ENCODE measurements at regions of chr11 and their contacts with region 1.

Region 1: DNA sequence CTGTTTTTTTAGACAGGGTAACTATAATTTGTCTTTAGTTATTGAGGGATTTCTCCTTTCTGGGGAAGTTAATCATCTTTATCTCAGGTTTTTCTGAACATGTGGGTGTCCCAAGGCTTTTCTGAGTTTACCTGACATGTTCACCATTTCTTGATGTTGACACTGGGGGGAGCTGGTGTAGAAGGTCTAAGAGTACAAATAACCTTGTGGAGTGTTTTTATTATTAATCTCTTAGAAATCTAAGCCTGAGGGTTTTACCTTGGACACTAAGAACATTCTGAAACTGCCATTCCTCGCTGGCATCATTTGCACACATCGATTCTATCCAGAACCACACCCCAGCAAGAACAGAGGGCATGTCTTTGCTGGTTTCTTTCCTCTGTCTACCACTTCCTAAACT is 15.6 kb upstream of the C11orf91 start:
- DNase-seq: peak; percentile 53
- ATAC-seq: peak; percentile 66
- H3K4me3 Mint-ChIP-seq: no peak overlapping the region
- H3K27ac Mint-ChIP-seq: no peak overlapping the region
- H3K4me1 Mint-ChIP-seq: peaks cover under 1% of the 10 kb centered on the region
- H3K27me3 Mint-ChIP-seq: no peaks in the 10 kb centered on the region
- CTCF ChIP-seq: peak; percentile 21

Region 2: GRCh38 chr11:33700425-33701271 is 15.6 kb before region 1 on chr11 and contains the start of gene C11orf91:
- CTCF ChIA-PET with region 1: interaction called, 20 read pairs
- POLR2A ChIA-PET with region 1: interaction called, 3 read pairs
- intact Hi-C with region 1: no loop called
- DNase-seq: peak; percentile 95
- ATAC-seq: peak; percentile 95
- H3K4me3 Mint-ChIP-seq: peak within 1 kb of the TSS; percentile 82
- H3K27ac Mint-ChIP-seq: peak within 1 kb of the TSS; percentile 37
- H3K4me1 Mint-ChIP-seq: peaks cover 17% of the 10 kb centered on the region
- H3K27me3 Mint-ChIP-seq: peaks cover 7% of the 10 kb centered on the region
- CTCF ChIP-seq: no peak
- total RNA-seq, gene C11orf91: not detected

Measured in activated CD8-positive, alpha-beta T cell treated with anti-CD3 and anti-CD28 coated beads for 36 hours (primary cell).